Sigmoid colon (tissue), 7 donors: ENCODE measurements at regions of chr9 and their contacts with region 1.

Region 1: DNA sequence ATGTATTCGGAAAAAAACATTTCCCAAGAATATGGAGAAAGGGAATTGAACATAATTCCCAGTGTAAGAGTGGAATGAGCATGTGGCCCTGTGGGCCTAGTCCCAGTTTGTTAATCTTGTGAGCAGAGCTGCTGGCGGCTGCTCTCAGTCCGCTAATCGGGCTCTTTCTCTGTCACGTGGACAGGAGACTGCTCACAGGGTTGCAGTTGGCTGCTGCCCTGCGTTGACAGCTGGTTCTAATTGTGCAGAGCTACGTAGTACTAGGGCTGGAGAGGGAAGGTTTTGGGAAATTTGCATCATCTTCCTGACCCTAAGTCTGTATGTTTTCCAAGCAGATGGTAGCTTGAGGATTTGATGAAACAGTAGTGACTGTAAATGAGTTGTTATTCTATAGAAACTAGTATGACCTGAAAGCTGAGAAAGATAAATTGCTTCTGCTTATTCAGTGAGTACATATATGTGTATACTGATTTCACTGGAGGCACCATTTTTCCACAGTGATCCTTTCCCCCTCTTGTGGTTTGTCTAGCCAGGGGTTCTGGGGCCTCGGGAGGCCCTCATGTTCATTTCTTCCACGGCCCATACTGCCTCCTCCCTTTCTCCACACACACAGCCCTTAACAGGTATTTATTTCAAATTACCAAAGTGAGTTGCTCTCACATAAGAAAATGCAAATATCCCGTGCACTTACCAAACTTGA is 100.6 kb downstream of the ANGPTL2 start:
- DNase-seq: peak; percentile 98
- H3K4me3 ChIP-seq: no peak overlapping the region
- H3K27ac ChIP-seq: peak overlapping the region; percentile 68 to 87 (median 77)
- H3K4me1 ChIP-seq: peaks cover 0 to 28% (median 27%) of the 10 kb centered on the region in 4 donors
- H3K27me3 ChIP-seq: no peaks in the 10 kb centered on the region
- CTCF ChIP-seq: no peak
- EP300 ChIP-seq: peak in 3 of 4 donors; percentile 39 to 84 (median 41)
- POLR2A ChIP-seq: no peak

Region 2: DNA sequence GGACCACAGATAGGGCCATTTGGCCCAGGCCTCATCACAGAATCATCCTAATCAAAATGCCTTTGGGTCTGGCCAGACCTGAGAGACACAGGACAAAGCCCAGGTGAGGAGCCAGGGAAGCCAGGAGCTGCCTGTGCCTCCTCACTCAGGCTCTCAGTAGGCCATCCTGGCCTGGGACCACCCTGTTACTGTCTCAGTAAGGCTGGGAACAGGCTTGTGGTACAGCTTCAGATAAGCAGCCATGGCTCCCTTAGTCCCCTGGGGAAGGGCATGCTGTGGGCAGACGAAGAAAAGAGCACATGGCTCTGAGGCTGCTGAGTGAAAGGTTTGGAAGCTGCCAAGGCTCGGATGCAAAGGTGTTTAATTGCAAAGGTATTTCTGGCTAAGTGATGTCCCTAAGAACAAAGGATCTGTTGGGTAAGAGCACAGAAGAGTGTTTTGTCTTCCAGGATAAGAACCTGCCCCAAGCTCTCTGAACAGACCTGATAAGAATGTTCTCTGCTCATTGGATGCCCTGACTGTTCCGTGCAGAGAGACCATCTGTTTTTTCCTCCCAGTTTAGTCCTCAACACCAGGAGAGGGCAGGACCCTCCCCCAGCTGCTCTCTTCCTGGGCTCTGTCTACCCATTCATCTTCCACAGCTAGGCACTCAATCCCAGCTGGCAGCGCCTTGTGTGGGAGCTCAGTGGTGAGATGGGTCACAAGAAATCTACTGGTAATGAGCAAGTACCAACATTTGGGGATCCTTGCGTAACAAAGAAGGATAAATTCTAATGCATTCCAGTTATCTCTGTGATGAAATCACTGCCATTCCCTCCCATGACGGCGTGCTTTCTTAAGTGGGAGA is 82.9 kb after region 1 on chr9:
- intact Hi-C with region 1: loop called (anchors 5 kb)
- DNase-seq: no peak
- H3K4me3 ChIP-seq: no peak overlapping the region
- H3K27ac ChIP-seq: peak overlapping the region in 3 of 4 donors; percentile 74 to 95 (median 87)
- H3K4me1 ChIP-seq: peaks cover 0 to 100% (median 94%) of the 10 kb centered on the region in 4 donors
- H3K27me3 ChIP-seq: no peaks in the 10 kb centered on the region
- CTCF ChIP-seq: no peak
- EP300 ChIP-seq: no peak
- POLR2A ChIP-seq: no peak

Region 3: DNA sequence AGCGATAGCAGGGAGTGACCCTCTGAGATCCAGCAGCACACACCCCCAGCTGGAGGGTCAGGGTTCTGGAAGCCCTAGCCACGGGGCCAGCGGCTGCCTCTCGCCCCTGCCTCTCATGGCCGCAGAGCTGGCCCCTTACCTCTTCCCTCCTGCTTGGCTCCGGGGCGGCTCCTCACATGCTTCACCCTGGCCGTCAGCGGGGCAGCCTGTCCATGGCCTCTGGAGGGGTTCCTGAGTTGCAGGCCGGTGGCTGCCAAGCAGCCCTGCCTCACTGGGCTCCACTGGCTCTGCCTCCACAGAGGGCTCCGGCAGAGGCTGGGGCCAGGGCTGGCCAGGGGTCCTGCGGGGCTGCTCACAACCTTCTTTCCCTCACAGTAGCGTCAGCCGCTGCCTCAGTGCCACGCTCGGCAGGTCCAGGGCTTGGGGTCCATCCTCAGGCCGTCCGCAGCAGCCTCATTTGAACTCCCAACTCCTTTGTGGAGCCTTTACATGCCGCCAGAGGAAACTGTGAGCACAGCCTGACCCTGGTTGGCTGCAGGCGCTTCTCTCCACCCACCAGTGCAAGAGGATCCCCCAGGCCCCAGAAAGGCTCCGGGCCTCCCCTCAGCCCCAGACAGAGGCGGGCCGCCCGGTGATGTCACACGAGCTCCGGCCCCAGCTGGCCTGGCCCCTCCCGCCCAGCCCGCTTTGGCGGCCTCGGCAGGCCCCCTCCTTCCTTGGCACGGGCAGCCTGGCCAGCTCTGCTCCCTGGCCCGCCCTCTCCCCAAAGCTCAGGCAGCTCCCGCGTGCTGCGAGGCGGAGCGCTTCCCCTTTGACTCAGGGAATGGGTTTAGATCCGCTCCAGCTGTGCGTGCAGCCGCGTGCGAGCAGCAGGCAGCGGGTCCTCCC is 100.6 kb after region 1 on chr9 and contains the start of gene ANGPTL2:
- intact Hi-C with region 1: loop called (anchors 5 kb)
- DNase-seq: peak; percentile 99
- H3K4me3 ChIP-seq: peak within 1 kb of the TSS; percentile 67 to 80 (median 69)
- H3K27ac ChIP-seq: peak within 1 kb of the TSS; percentile 94 to 99 (median 96)
- H3K4me1 ChIP-seq: peaks cover 0 to 68% (median 61%) of the 10 kb centered on the region in 4 donors
- H3K27me3 ChIP-seq: no peaks in the 10 kb centered on the region
- CTCF ChIP-seq: peak in 2 of 4 experiments; percentile 6 to 8
- EP300 ChIP-seq: peak in 2 of 4 donors; percentile 51 to 69
- POLR2A ChIP-seq: peak; percentile 85 to 96
- total RNA-seq, gene ANGPTL2: 50.5 to 112 (median 78.8) TPM

Region 4: DNA sequence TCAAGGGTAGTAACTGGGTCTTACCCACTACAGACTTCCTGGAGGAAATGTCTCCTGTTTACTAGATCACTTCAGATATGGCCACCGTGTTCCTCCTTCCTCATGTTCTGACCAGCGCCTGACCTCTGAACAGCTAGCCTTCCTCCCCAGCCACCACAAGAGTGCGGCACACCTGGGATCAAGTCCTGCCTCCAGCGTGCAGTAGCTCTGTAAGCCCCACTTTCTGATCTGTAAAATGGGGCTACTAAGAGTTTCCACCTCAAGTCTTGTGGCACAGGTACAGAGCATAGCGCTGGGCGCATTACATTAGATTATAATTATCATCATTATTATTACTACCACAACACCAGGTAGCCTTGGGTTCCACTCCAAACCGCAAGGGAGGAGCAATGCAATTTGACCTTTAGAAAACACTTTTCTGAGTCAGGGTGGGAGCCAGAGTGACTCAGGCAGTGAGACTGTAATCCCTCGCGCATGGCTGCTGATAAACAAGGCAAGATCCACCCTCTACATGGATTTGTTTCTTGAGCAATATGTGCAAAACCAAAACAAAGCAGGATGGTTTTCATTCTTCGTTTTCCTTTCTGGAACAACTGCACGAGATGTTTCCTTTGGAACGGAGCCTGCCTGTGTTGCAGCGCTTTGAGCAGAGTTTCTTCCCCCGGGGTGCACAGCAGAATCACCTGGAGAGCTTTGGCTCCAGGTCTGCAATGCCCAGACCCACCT is 165.6 kb after region 1 on chr9:
- intact Hi-C with region 1: loop called (anchors 5 kb)
- DNase-seq: peak; percentile 94
- H3K4me3 ChIP-seq: no peak overlapping the region
- H3K27ac ChIP-seq: peak overlapping the region; percentile 84 to 93 (median 88)
- H3K4me1 ChIP-seq: peaks cover 0 to 61% (median 51%) of the 10 kb centered on the region in 4 donors
- H3K27me3 ChIP-seq: no peaks in the 10 kb centered on the region
- CTCF ChIP-seq: no peak
- EP300 ChIP-seq: peak in 2 of 4 donors; percentile 58 to 82
- POLR2A ChIP-seq: no peak